Colonic mucosa (tissue), 4 donors: ENCODE measurements at regions of chr7 and their contacts with region 1.

Region 1: GRCh38 chr7:18352339-18353255 is 143.0 kb upstream of the HDAC9 start:
- DNase-seq: peak; percentile 32
- H3K4me3 ChIP-seq: no peak overlapping the region
- H3K27ac ChIP-seq: no peak overlapping the region
- H3K4me1 ChIP-seq: no peaks in the 10 kb centered on the region
- H3K27me3 ChIP-seq: no peaks in the 10 kb centered on the region
- CTCF ChIP-seq: peak; percentile 51

Region 2: DNA sequence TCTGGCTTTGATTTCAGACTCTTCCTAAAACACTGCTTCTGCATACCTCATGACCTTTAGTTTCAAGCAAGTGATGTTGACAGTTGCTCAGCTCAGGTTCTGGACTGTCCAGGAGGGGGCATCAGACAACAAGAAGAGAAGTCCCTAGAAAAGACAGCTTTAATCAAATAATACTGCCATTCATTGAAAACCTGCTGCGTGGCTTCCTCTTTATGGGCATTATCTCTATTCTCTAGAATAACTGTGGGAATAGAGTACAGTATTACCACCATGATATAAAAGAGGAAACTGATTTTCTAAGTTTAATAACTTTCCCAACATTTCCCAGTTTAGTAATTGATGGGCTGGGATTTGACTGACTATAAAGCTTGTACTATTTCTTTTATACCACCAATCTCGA is 582.7 kb before region 1 on chr7:
- intact Hi-C with region 1: loop called (anchors 5 kb)
- DNase-seq: peak; percentile 70
- H3K4me3 ChIP-seq: no peak overlapping the region
- H3K27ac ChIP-seq: no peak overlapping the region
- H3K4me1 ChIP-seq: no peaks in the 10 kb centered on the region
- H3K27me3 ChIP-seq: no peaks in the 10 kb centered on the region
- CTCF ChIP-seq: peak; percentile 50

Region 3: GRCh38 chr7:18290223-18290622 is 62.4 kb before region 1 on chr7:
- intact Hi-C with region 1: no loop called
- DNase-seq: no peak
- H3K4me3 ChIP-seq: no peak overlapping the region
- H3K27ac ChIP-seq: no peak overlapping the region
- H3K4me1 ChIP-seq: no peaks in the 10 kb centered on the region
- H3K27me3 ChIP-seq: no peaks in the 10 kb centered on the region
- CTCF ChIP-seq: no peak

Region 4: GRCh38 chr7:18570890-18571478 is 218.4 kb after region 1 on chr7:
- intact Hi-C with region 1: loop called (anchors 5 kb)
- DNase-seq: no peak
- H3K4me3 ChIP-seq: no peak overlapping the region
- H3K27ac ChIP-seq: no peak overlapping the region
- H3K4me1 ChIP-seq: no peaks in the 10 kb centered on the region
- H3K27me3 ChIP-seq: no peaks in the 10 kb centered on the region
- CTCF ChIP-seq: no peak

Region 5: GRCh38 chr7:18666107-18666728 is 313.6 kb after region 1 on chr7:
- intact Hi-C with region 1: loop called (anchors 5 kb)
- DNase-seq: peak; percentile 77
- H3K4me3 ChIP-seq: no peak overlapping the region
- H3K27ac ChIP-seq: no peak overlapping the region
- H3K4me1 ChIP-seq: peaks cover 6% of the 10 kb centered on the region
- H3K27me3 ChIP-seq: no peaks in the 10 kb centered on the region
- CTCF ChIP-seq: peak; percentile 87